ENCODE measurements at regions of chr12 and their contacts with region 1.

Region 1: DNA sequence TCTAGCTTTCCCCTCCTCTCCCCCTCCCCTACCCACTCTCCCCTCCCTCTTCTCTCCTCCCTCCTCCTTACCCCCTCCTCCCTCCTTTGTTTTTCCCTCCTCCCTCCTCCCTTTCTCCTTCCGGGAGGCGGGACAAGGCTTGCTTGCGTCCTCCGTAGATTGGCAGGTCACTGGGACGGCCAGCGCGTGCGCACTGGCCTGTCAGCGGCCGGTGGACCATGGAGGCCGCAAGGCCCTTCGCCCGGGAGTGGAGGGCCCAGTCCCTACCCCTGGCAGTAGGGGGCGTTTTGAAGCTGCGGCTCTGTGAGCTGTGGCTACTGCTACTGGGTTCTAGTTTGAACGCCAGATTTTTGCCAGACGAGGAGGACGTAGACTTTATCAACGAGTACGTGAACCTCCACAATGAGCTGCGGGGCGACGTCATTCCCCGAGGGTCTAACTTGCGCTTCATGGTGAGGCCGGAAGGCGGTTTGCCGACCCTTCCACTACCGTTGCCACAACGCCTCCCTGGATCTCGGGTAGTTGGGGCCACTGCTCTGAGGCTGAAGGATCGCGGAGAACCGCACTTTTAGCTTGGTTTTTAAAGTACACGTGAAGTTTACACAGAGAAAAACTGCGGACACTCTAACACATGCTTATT is at the start of gene GLIPR1L2:
- DNase-seq: peak; percentile 66 to 93 (median 78)
- ATAC-seq: peak; percentile 90 to 95 (median 93)
- H3K4me3 ChIP-seq: peak within 1 kb of the TSS; percentile 73 to 74
- H3K4me3 Mint-ChIP-seq: peak within 1 kb of the TSS; percentile 90 to 93 (median 92)
- H3K27ac ChIP-seq: peak within 1 kb of the TSS; percentile 91
- H3K27ac Mint-ChIP-seq: peak within 1 kb of the TSS; percentile 98 to 99
- H3K4me1 ChIP-seq: peaks cover 9 to 12% of the 10 kb centered on the region in 2 experiments
- H3K4me1 Mint-ChIP-seq: peaks cover 47 to 65% (median 48%) of the 10 kb centered on the region in 3 donors
- H3K27me3 ChIP-seq: no peaks in the 10 kb centered on the region
- H3K27me3 Mint-ChIP-seq: no peaks in the 10 kb centered on the region
- total RNA-seq, gene GLIPR1L2: 0.51 to 2.9 (median 0.72) TPM

Region 2: DNA sequence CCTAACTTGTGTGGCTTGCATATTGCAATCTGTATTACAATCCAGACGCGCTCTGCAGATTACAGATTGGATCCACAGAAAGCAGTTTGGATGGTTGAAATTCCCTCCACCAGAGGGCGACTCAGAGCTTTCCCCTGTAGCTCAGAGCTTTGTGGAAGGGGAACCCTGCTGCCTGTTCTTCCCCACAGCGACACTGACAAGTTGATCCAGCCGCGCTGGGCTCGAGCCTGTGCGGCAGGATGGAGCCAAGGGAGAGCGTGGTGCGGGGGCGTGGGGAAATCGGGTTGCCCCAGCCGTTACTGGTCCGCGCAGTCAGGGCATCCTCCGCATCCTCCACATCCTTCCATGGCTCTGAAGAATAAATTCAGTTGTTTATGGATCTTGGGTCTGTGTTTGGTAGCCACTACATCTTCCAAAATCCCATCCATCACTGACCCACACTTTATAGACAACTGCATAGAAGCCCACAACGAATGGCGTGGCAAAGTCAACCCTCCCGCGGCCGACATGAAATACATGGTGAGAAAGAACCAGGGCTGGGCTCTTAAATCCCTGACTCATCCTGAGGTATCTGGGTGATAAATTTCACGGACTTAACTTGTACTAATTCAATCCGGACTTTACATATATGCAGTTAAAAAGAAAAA is 56.5 kb before region 1 on chr12 and contains the start of gene GLIPR1L1:
- CTCF ChIA-PET with region 1: interaction called in 1 of 2 experiments, 11 read pairs
- POLR2A ChIA-PET with region 1: interaction called in 1 of 2 experiments, 4 read pairs
- DNase-seq: peak; percentile 52 to 90 (median 74)
- ATAC-seq: peak; percentile 81 to 90 (median 86)
- H3K4me3 ChIP-seq: peak within 1 kb of the TSS; percentile 28 to 45
- H3K4me3 Mint-ChIP-seq: peak within 1 kb of the TSS; percentile 55 to 71 (median 66)
- H3K27ac ChIP-seq: no peak within 1 kb of the TSS
- H3K27ac Mint-ChIP-seq: no peak within 1 kb of the TSS
- H3K4me1 ChIP-seq: peaks cover 2 to 16% of the 10 kb centered on the region in 2 experiments
- H3K4me1 Mint-ChIP-seq: peaks cover 18 to 21% (median 19%) of the 10 kb centered on the region in 3 donors
- H3K27me3 ChIP-seq: peaks cover 4 to 12% of the 10 kb centered on the region in 2 experiments
- H3K27me3 Mint-ChIP-seq: peaks cover 15 to 19% of the 10 kb centered on the region in 2 donors
- total RNA-seq, gene GLIPR1L1: not detected

Measured in T-cell (primary cell).